Activated CD4-positive, alpha-beta T cell treated with anti-CD3 and anti-CD28 coated beads for 36 hours (primary cell): ENCODE measurements at regions of chr15 and their contacts with region 1.

Region 1: DNA sequence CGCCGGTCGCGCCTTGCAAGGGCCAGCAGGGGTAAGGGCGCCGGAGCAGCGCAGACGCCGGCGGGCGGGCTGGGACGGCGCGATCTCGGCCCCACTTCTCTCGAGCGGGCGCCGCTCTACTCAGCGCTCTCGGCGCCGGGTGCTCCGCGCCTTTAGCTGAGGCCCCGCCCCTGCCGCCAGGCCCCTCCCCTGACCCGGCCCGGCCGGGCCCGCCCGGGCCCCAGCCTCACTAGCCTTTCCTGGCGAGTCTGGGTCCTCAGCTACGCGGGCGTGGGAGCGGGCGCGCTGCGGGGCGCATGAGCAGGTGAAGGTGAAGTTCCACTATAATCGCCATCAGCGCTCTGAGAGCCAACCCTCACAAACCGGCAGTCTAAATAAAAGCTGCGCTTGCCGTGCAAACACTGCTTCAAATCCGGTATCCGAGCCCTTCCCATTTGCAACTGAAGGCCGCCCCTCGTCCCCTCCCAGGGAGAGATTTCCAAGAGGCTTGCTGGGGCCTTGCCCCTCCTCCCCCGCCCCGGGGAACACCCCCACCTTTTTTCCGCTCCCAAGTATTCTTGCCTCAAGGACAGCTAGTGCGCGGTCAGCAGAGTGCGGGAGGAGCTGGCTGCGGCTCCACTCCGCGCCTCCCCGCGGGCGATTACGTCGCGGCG is at the start of gene RPP25:
- DNase-seq: peak; percentile 85
- ATAC-seq: peak; percentile 84
- H3K4me3 Mint-ChIP-seq: peak within 1 kb of the TSS; percentile 65
- H3K27ac Mint-ChIP-seq: no peak within 1 kb of the TSS
- H3K4me1 Mint-ChIP-seq: peaks cover 46% of the 10 kb centered on the region
- H3K27me3 Mint-ChIP-seq: peaks cover 25% of the 10 kb centered on the region
- total RNA-seq, gene RPP25: 5.4 to 6.2 TPM

Region 2: GRCh38 chr15:74635228-74635627 is 321.5 kb before region 1 on chr15:
- CTCF ChIA-PET with region 1: interaction called, 5 read pairs
- POLR2A ChIA-PET with region 1: no interaction called
- intact Hi-C with region 1: loop called in 1 of 2 experiments (anchors 10 kb)
- DNase-seq: peak; percentile 87
- ATAC-seq: peak; percentile 90
- H3K4me3 Mint-ChIP-seq: no peak overlapping the region
- H3K27ac Mint-ChIP-seq: no peak overlapping the region
- H3K4me1 Mint-ChIP-seq: no peaks in the 10 kb centered on the region
- H3K27me3 Mint-ChIP-seq: no peaks in the 10 kb centered on the region

Region 3: DNA sequence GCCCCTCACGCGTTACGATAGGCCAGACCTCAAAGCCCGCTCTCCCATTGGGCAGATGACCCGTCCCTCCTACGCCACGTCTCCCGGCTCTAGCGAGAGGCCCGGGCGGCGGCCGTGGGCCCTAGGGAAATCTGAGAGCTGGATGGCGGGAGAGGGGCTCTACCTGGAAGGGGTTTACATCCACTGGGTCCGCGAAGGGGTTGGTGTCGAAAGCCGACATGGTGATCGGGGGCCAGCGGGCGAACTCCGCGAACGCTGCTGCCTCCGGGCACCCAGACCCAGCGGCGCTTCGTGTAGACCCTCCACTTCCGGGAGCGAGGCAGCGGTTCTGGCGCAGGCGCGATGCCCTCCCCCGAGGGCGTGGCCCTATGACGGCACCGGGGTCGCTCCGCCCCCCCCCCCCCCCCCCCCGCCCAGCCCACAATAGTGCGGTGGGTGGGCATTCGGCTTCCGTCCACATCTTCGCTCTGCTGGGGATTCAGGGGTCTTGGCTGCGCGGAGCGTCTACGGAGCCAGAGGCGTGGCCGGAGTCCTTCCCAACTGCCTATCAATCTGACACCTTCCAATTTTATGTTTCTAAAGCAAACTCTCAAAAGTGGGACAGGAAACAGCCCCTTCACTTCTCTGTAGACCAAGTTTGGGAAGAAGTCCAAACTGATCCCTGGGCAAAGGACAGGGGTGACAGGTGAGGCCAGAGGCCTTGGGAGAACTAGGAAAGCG is 83.6 kb before region 1 on chr15 and contains the start of gene SCAMP2:
- CTCF ChIA-PET with region 1: interaction called, 3 read pairs
- POLR2A ChIA-PET with region 1: interaction called, 3 read pairs
- intact Hi-C with region 1: loop called in 1 of 2 experiments (anchors 1 kb)
- DNase-seq: peak; percentile 94
- ATAC-seq: peak; percentile 84
- H3K4me3 Mint-ChIP-seq: peak within 1 kb of the TSS; percentile 87
- H3K27ac Mint-ChIP-seq: peak within 1 kb of the TSS; percentile 87
- H3K4me1 Mint-ChIP-seq: peaks cover 48% of the 10 kb centered on the region
- H3K27me3 Mint-ChIP-seq: no peaks in the 10 kb centered on the region
- total RNA-seq, gene SCAMP2: 61.6 to 83.4 TPM

Region 4: DNA sequence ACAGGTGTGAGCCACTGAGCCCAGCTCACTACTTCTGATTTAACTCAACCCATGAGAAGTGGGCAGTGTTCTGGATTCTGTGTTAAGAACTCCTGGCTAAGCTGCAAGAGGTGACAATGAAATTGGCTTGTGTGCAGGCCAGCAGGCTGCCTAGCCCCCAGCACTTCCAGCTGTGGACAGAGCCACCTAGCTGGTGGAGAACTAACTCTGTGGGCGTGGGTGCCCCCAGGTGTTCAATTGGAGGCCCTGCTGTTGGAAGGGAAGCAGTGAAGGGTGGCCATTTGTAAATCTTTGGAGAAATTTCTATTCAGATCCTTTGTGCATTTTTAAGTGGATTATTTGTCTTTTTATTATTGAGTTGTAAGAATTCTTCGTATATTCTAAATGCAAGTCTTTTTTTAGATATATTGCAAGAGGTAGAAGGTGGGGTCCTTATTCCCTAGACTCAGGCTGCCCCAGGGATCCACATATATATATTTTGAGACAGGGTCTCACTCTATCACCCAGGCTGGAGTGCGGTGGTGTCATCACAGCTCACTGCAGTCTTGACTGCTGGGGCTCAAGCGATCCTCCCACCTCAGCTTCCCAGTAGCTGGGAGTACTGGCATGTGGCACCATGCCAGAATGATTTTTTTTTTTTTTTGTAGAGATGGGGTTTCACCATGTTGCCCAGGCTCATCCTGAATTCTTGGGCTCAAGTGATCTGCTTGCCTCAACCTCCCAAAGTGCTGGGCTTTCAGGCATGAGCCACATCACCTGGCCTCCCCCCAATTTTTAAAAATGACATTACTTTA is 31.4 kb after region 1 on chr15:
- CTCF ChIA-PET with region 1: interaction called, 6 read pairs
- POLR2A ChIA-PET with region 1: interaction called, 3 read pairs
- intact Hi-C with region 1: loop called in 1 of 2 experiments (anchors 1 kb)
- DNase-seq: peak; percentile 76
- ATAC-seq: peak; percentile 57
- H3K4me3 Mint-ChIP-seq: no peak overlapping the region
- H3K27ac Mint-ChIP-seq: no peak overlapping the region
- H3K4me1 Mint-ChIP-seq: peaks cover 16% of the 10 kb centered on the region
- H3K27me3 Mint-ChIP-seq: peaks cover 13% of the 10 kb centered on the region

Region 5: DNA sequence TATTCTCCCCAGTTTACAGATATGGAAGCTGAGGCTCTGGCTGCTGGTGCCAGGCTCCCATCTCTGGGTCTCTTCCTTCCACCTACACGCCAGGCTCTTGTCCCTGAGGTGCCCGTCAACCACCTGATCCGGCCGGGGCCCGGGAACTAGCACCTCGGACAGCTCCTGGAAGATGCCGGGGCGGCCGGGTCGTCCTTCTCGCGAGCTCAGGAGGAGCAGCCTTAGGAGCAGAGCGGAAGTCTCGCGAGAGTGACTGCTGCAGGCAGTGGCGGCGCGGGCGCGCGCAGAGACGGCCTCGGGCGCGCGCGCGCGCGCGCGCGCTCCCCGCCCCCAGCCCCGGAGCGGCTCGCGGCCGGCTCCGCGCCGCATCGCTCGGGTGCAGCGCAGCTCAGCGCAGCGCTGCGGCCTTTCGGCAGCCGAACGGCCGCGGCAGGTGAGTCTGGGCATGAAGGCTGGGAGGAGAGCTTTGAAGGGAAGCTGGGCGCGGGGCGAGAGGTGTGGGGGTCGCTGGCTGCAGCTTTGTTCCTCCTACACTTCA is 38.5 kb after region 1 on chr15 and contains the start of gene SCAMP5:
- CTCF ChIA-PET with region 1: interaction called, 4 read pairs
- POLR2A ChIA-PET with region 1: no interaction called
- intact Hi-C with region 1: loop called (anchors 1 to 2 kb)
- DNase-seq: peak; percentile 98
- ATAC-seq: peak; percentile 98
- H3K4me3 Mint-ChIP-seq: peak within 1 kb of the TSS; percentile 69
- H3K27ac Mint-ChIP-seq: no peak within 1 kb of the TSS
- H3K4me1 Mint-ChIP-seq: peaks cover 16% of the 10 kb centered on the region
- H3K27me3 Mint-ChIP-seq: peaks cover 8% of the 10 kb centered on the region
- total RNA-seq, gene SCAMP5: 3.9 to 4.5 TPM